ENCODE measurements at regions of chr9 and their contacts with region 1.

Region 1: GRCh38 chr9:29588361-29588760 is 2015.1 kb upstream of the C9orf72 start:
- DNase-seq: no peak
- H3K4me3 ChIP-seq: no peak overlapping the region
- H3K27ac ChIP-seq: no peak overlapping the region
- H3K4me1 ChIP-seq: no peaks in the 10 kb centered on the region
- H3K27me3 ChIP-seq: no peaks in the 10 kb centered on the region
- CTCF ChIP-seq: no peak

Region 2: GRCh38 chr9:28970241-28970654 is 618.1 kb before region 1 on chr9:
- CTCF ChIA-PET with region 1: no interaction called
- dilution Hi-C with region 1: no loop called
- in situ Hi-C with region 1: no loop called
- intact Hi-C with region 1: no loop called
- DNase-seq: no peak
- H3K4me3 ChIP-seq: no peak overlapping the region
- H3K27ac ChIP-seq: no peak overlapping the region
- H3K4me1 ChIP-seq: no peaks in the 10 kb centered on the region
- H3K27me3 ChIP-seq: no peaks in the 10 kb centered on the region
- CTCF ChIP-seq: no peak

Region 3: GRCh38 chr9:29556317-29556716 is 32.0 kb before region 1 on chr9:
- CTCF ChIA-PET with region 1: no interaction called
- dilution Hi-C with region 1: no loop called
- in situ Hi-C with region 1: no loop called
- intact Hi-C with region 1: no loop called
- DNase-seq: peak; percentile 86
- H3K4me3 ChIP-seq: no peak overlapping the region
- H3K27ac ChIP-seq: no peak overlapping the region
- H3K4me1 ChIP-seq: no peaks in the 10 kb centered on the region
- H3K27me3 ChIP-seq: no peaks in the 10 kb centered on the region
- CTCF ChIP-seq: peak in 1 of 2 donors; percentile 16

Region 4: DNA sequence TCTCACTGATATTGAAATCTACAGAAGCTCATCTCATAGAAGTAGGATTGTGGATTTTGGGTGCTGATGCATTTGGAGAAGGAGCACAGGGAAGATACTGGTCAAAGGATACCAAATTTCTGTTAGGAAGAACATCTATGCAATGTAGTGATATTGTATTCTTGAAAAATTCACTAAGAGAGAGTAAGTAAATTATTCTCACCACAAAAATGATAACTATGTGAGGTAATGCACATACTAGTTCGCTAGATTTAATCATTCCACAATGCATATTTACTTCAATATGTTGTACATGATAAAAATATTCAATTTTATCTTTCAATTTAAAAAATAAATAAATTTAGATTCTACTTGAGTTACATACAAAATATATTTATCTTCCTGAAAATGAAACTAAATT is 25.4 kb after region 1 on chr9:
- CTCF ChIA-PET with region 1: no interaction called
- dilution Hi-C with region 1: no loop called
- in situ Hi-C with region 1: no loop called
- intact Hi-C with region 1: loop called (anchors 1 kb)
- DNase-seq: no peak
- H3K4me3 ChIP-seq: no peak overlapping the region
- H3K27ac ChIP-seq: no peak overlapping the region
- H3K4me1 ChIP-seq: no peaks in the 10 kb centered on the region
- H3K27me3 ChIP-seq: peaks cover 9% of the 10 kb centered on the region
- CTCF ChIP-seq: no peak